Transverse colon (tissue), 4 donors: ENCODE measurements at regions of chr5 and their contacts with region 1.

Region 1: DNA sequence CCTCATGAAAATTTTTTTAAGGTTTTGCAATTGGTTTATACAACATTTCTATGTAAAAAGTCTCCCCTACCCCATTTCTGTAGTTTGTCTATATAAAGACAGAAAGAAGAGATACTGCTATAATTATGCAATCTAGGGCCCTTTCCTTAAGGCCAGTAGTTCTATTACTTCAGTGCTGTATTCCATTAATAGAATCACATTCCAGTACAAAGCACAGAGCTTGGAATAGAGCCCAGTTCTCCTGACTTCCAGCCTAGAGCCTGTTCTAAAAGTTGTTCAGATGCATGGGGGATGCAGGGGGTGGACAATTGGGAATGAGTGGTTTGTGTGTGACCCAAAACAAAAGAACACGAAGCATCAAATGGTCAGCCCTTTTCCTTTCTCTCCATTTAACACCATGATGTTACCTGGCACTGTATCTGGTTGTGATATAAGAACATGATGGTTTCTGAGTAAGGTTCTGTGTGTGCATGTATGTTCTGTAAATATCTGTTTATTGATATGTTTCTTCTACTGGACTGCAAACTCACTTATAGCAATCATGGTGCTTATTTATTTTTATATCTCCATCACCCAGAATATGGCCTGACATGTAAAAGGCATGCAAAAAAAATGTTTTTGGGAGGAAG is 8.2 kb upstream of the GRAMD2B start:
- DNase-seq: no peak
- H3K4me3 ChIP-seq: no peak overlapping the region
- H3K27ac ChIP-seq: peak overlapping the region; percentile 54 to 72 (median 56)
- H3K4me1 ChIP-seq: peaks cover 7 to 15% (median 11%) of the 10 kb centered on the region in 4 donors
- H3K27me3 ChIP-seq: no peaks in the 10 kb centered on the region
- CTCF ChIP-seq: no peak
- EP300 ChIP-seq: no peak
- POLR2A ChIP-seq: no peak

Region 2: GRCh38 chr5:126369967-126370731 is 44.8 kb before region 1 on chr5:
- in situ Hi-C with region 1: no loop called
- intact Hi-C with region 1: loop called (anchors 10 kb)
- DNase-seq: no peak
- H3K4me3 ChIP-seq: peak overlapping the region in 1 of 4 donors; percentile 55
- H3K27ac ChIP-seq: peak overlapping the region; percentile 81 to 92 (median 84)
- H3K4me1 ChIP-seq: peaks cover 13 to 36% (median 26%) of the 10 kb centered on the region in 4 donors
- H3K27me3 ChIP-seq: no peaks in the 10 kb centered on the region
- CTCF ChIP-seq: peak in 3 of 5 experiments; percentile 23 to 54 (median 50)
- EP300 ChIP-seq: no peak
- POLR2A ChIP-seq: no peak

Region 3: DNA sequence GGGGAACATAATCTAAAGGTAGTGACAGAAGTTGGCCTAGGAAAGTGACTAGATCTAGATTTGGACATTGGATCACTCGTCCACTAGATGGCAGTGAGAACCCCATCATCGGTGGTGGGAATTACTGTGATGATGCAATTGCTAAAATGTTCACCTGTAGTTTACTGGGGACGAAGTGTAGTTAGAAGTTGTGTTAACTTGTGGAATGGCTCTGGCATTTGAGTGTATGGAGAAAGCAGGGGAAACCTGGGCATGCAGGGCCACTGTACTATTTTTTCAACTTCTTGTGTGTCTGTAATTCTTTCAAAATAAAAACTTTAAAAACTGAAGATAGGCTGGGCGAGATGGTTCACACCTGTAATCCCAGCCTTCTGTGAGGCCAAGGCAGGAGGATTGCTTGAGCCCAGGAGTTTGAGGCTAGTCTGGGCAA is 261.2 kb after region 1 on chr5:
- in situ Hi-C with region 1: no loop called
- intact Hi-C with region 1: no loop called
- DNase-seq: peak; percentile 69
- H3K4me3 ChIP-seq: no peak overlapping the region
- H3K27ac ChIP-seq: no peak overlapping the region
- H3K4me1 ChIP-seq: peaks cover 0 to 32% (median 8%) of the 10 kb centered on the region in 4 donors
- H3K27me3 ChIP-seq: no peaks in the 10 kb centered on the region
- CTCF ChIP-seq: peak; percentile 76 to 90 (median 80)
- EP300 ChIP-seq: no peak
- POLR2A ChIP-seq: no peak